Activated B cell treated with CpG ODN at 0.5 μM for 24 hours (primary cell): ENCODE measurements at regions of chr4 and their contacts with region 1.

Region 1: GRCh38 chr4:155758481-155759404 is at the start of gene GUCY1B1:
- DNase-seq: peak; percentile 64
- ATAC-seq: peak; percentile 97
- H3K4me3 Mint-ChIP-seq: peak within 1 kb of the TSS; percentile 68
- H3K27ac Mint-ChIP-seq: peak within 1 kb of the TSS; percentile 72
- H3K4me1 Mint-ChIP-seq: peaks cover 8% of the 10 kb centered on the region
- H3K27me3 Mint-ChIP-seq: peaks cover 20% of the 10 kb centered on the region
- CTCF ChIP-seq: no peak
- total RNA-seq, gene GUCY1B1: 0.22 and 0.39 TPM in 2 replicates

Region 2: GRCh38 chr4:154989511-154989910 is 769.2 kb before region 1 on chr4:
- CTCF ChIA-PET with region 1: no interaction called
- POLR2A ChIA-PET with region 1: no interaction called
- intact Hi-C with region 1: no loop called
- DNase-seq: no peak
- ATAC-seq: no peak
- H3K4me3 Mint-ChIP-seq: no peak overlapping the region
- H3K27ac Mint-ChIP-seq: no peak overlapping the region
- H3K4me1 Mint-ChIP-seq: no peaks in the 10 kb centered on the region
- H3K27me3 Mint-ChIP-seq: no peaks in the 10 kb centered on the region
- CTCF ChIP-seq: no peak

Region 3: GRCh38 chr4:155376387-155377268 is 382.1 kb before region 1 on chr4 and contains the start of gene MAP9:
- CTCF ChIA-PET with region 1: no interaction called
- POLR2A ChIA-PET with region 1: no interaction called
- intact Hi-C with region 1: loop called (anchors 1 kb)
- DNase-seq: peak; percentile 84
- ATAC-seq: peak; percentile 96
- H3K4me3 Mint-ChIP-seq: peak within 1 kb of the TSS; percentile 92
- H3K27ac Mint-ChIP-seq: peak within 1 kb of the TSS; percentile 92
- H3K4me1 Mint-ChIP-seq: peaks cover 15% of the 10 kb centered on the region
- H3K27me3 Mint-ChIP-seq: peaks cover 3% of the 10 kb centered on the region
- CTCF ChIP-seq: no peak
- total RNA-seq, gene MAP9: 8.8 and 10.7 TPM in 2 replicates

Region 4: DNA sequence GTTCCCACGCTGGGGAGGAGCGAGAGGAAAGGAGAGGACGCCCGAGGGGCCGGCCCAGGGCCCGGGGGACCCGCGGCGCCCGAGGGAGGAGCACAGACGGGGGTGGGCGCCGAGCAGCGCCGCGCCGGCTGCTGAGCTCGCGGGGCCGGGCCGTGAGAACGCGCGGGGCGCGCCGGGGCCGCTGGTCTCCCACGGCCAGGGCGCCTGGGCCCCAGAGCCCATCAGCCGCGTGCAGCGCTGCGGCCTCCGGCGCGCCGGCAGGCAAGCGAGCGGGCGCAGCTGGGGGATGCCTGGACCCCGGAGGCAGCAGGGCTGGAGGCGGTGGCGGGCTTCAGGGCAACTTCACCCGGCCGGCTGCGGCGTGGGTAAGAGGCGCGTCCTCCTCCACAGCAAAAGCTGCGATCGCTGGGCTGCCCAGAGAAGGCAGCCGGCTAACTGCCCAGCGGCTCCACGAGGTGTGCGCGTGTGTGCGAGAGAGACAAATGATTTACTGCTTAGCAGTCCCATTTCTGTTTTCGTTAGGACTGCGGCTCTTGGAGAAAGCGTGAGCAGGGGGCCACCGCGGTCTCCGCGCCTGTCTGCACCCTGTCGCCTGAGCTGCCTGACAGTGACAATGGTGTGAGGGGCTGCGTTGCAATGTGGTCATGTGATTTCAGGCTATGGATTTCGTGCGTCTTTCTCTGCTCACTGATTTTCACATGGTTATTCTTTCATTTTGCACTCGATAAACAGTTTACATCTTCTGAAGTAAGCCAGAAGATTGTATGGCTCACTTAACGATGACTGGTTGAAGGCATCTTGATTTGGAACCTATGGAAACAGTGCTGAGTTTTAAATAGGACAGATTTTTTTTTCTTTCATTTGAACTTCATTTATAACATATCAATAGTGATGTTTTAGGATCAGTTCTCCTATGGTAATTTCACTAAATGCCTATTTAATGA is 90.9 kb before region 1 on chr4:
- CTCF ChIA-PET with region 1: no interaction called
- POLR2A ChIA-PET with region 1: no interaction called
- intact Hi-C with region 1: loop called (anchors 2 kb)
- DNase-seq: peak; percentile 16
- ATAC-seq: peak; percentile 56
- H3K4me3 Mint-ChIP-seq: peak overlapping the region; percentile 88
- H3K27ac Mint-ChIP-seq: no peak overlapping the region
- H3K4me1 Mint-ChIP-seq: peaks cover 16% of the 10 kb centered on the region
- H3K27me3 Mint-ChIP-seq: peaks cover 25% of the 10 kb centered on the region
- CTCF ChIP-seq: no peak

Region 5: GRCh38 chr4:155854597-155855226 is 96.0 kb after region 1 on chr4:
- CTCF ChIA-PET with region 1: no interaction called
- POLR2A ChIA-PET with region 1: no interaction called
- intact Hi-C with region 1: no loop called
- DNase-seq: no peak
- ATAC-seq: no peak
- H3K4me3 Mint-ChIP-seq: no peak overlapping the region
- H3K27ac Mint-ChIP-seq: no peak overlapping the region
- H3K4me1 Mint-ChIP-seq: no peaks in the 10 kb centered on the region
- H3K27me3 Mint-ChIP-seq: no peaks in the 10 kb centered on the region
- CTCF ChIP-seq: no peak